ENCODE measurements at regions of chr21 and their contacts with region 1.

Region 1: GRCh38 chr21:37257511-37257966 is 9.6 kb downstream of the VPS26C start:
- DNase-seq: no peak
- H3K4me3 ChIP-seq: peak overlapping the region; percentile 43; the same call in 1 of the 2 replicates
- H3K27ac ChIP-seq: peak overlapping the region; percentile 39
- H3K4me1 ChIP-seq: no peaks in the 10 kb centered on the region
- H3K27me3 ChIP-seq: no peaks in the 10 kb centered on the region
- CTCF ChIP-seq: no peak

Region 2: GRCh38 chr21:37348664-37349063 is 91.1 kb after region 1 on chr21:
- CTCF ChIA-PET with region 1: no interaction called
- POLR2A ChIA-PET with region 1: interaction called, 13 read pairs
- intact Hi-C with region 1: no loop called
- DNase-seq: no peak
- H3K4me3 ChIP-seq: no peak overlapping the region
- H3K27ac ChIP-seq: no peak overlapping the region
- H3K4me1 ChIP-seq: no peaks in the 10 kb centered on the region
- H3K27me3 ChIP-seq: no peaks in the 10 kb centered on the region
- CTCF ChIP-seq: no peak

Measured in PC-9 (cell line).